ENCODE measurements at regions of chr22 and their contacts with region 1.

Region 1: GRCh38 chr22:21641789-21642583 is at the start of gene SDF2L1:
- DNase-seq: peak; percentile 91
- H3K4me3 ChIP-seq: peak within 1 kb of the TSS; percentile 92
- H3K27me3 ChIP-seq: no peaks in the 10 kb centered on the region
- CTCF ChIP-seq: no peak
- polyA plus RNA-seq, gene SDF2L1: 10.9 and 22.8 TPM in 2 replicates

Region 2: DNA sequence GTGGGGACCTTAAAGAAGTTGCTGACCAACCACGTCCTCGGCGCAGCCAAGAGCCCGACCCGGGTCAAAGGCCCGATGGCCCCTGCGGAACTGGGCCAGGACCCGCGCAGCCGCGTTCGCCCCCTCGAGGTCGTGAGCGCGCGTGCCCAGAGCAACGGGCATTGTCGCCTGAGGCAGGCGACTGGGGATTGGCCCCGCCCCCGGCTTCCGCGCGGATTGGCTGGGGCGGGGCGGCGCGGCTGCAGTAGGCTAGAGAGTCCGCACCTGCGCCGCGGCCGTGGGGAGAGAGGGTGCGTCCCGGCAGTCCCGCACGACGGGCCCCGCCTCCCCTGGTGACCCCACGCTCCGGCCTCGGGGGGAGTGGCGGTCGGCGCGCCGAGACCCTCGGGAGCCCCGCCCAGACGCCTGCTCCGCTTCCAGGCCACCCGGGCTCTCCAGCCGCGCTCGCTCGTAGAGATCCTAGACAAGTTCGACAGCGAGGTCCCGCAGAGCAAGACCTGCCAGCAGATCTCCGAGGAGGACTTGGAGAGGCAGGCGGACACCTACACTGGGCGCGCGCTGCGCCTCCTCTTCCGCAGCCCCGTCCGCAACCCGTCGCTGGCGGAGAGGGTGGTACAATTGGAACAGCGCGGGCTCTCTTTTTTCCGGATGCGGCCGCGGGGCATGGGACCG is 15.5 kb after region 1 on chr22:
- CTCF ChIA-PET with region 1: interaction called, 16 read pairs
- POLR2A ChIA-PET with region 1: no interaction called
- DNase-seq: no peak
- H3K4me3 ChIP-seq: peak overlapping the region; percentile 51
- H3K27me3 ChIP-seq: peaks cover 2% of the 10 kb centered on the region; the same call in 1 of the 2 replicates
- CTCF ChIP-seq: peak; percentile 37; the same call in 1 of the 2 replicates

Measured in BJ (cell line).